Activated T-helper 2 cell treated with anti-CD3 and anti-CD28 coated beads, Interferon-gamma antibody, Interleukin-2, Interleukin-4, amounts not matched to agents 10 μg/mL and 5 μg/mL and 100 μg/mL, durations not matched to agents 14 hours and 24 hours and 36 hours (primary cell): ENCODE measurements at regions of chr21 and their contacts with region 1.

Region 1: GRCh38 chr21:28884976-28885852 is 107.5 kb downstream of the LTN1 start:
- DNase-seq: peak; percentile 93
- H3K4me3 Mint-ChIP-seq: peak overlapping the region; percentile 91
- H3K27ac Mint-ChIP-seq: peak overlapping the region; percentile 98
- H3K4me1 Mint-ChIP-seq: peaks cover 11% of the 10 kb centered on the region
- H3K27me3 Mint-ChIP-seq: peaks cover 10% of the 10 kb centered on the region

Region 2: DNA sequence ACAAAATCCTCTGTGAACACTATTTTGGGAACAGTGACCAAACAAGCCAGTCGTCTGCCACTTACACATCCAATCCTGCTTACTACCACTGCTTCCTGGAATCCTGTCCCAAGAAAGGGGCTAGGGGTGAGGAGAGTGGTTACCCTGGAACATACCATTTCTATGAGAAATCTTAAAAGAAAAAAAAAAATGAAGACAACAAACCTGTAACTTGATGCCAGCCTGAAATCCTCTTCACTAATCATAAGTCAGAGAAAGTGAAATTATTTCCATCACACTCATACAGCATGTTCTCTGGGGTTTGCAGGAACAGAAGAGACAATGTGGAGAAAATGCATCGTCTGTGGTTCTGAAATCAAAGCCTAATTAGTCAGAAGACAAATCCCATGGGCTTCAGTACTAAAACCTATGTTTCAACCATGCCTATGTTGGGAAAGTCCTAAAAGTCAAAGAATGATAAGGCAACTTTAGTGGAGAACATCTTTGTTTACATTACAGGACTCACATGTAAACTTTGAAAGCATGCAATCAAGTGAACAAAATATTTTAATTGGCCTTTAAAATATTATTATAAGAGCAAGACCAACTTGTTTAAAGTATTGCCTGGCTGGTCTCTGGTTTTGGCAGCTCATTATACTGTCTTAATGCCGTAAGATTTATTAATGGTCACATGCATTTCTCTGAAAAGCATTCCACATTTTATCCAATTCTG is 113.3 kb before region 1 on chr21:
- intact Hi-C with region 1: loop called (anchors 10 kb)
- DNase-seq: no peak
- H3K4me3 Mint-ChIP-seq: no peak overlapping the region
- H3K27ac Mint-ChIP-seq: no peak overlapping the region
- H3K4me1 Mint-ChIP-seq: peaks cover 40% of the 10 kb centered on the region
- H3K27me3 Mint-ChIP-seq: no peaks in the 10 kb centered on the region

Region 3: DNA sequence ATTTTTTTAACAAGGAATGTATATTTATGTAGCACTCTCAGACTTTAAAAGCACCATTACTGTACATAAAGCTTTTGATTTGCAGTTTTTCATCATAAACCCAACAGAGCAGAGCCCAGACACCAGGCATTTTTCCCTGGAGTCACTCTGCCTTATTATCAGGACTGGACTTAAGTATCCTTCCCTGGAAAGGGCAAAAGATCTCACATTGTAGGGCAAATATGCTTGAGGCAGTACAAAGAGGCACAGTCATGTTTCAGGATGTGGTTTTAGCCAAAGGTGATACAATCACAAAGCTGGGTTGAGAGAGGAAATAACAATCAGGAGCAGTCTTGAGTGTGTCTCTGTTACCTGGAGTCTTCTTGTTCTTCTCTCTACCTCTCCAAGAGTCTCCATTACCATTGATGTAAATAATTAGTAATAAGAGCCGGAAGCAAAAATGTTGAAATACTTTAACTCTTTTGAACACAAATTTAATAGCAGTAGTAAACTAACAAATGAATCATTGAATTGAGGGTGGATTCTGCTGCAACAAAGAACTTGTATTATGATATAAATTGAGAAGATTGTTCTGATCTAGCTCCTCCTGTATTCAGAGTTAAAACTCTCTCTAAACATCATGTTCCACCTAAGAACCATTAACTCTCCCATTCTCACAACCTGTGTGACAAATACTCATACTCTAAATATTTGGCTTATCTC is 53.0 kb before region 1 on chr21:
- intact Hi-C with region 1: loop called (anchors 2 kb)
- DNase-seq: peak; percentile 28
- H3K4me3 Mint-ChIP-seq: peak overlapping the region; percentile 9
- H3K27ac Mint-ChIP-seq: peak overlapping the region; percentile 67
- H3K4me1 Mint-ChIP-seq: peaks cover 66% of the 10 kb centered on the region
- H3K27me3 Mint-ChIP-seq: no peaks in the 10 kb centered on the region

Region 4: GRCh38 chr21:28992526-28993292 is 107.5 kb after region 1 on chr21 and contains the start of gene LTN1:
- intact Hi-C with region 1: loop called (anchors 1 kb)
- DNase-seq: peak; percentile 99
- H3K4me3 Mint-ChIP-seq: peak within 1 kb of the TSS; percentile 95
- H3K27ac Mint-ChIP-seq: peak within 1 kb of the TSS; percentile 95
- H3K4me1 Mint-ChIP-seq: peaks cover 30% of the 10 kb centered on the region
- H3K27me3 Mint-ChIP-seq: no peaks in the 10 kb centered on the region
- total RNA-seq, gene LTN1: 24.9 and 27.5 TPM in 2 replicates

Region 5: GRCh38 chr21:29024474-29025327 is 139.5 kb after region 1 on chr21 and contains the start of gene USP16:
- intact Hi-C with region 1: loop called (anchors 1 kb)
- DNase-seq: peak; percentile 96
- H3K4me3 Mint-ChIP-seq: peak within 1 kb of the TSS; percentile 96
- H3K27ac Mint-ChIP-seq: peak within 1 kb of the TSS; percentile 99
- H3K4me1 Mint-ChIP-seq: peaks cover 28% of the 10 kb centered on the region
- H3K27me3 Mint-ChIP-seq: no peaks in the 10 kb centered on the region
- total RNA-seq, gene USP16: 40.9 and 44.1 TPM in 2 replicates

Region 6: GRCh38 chr21:29073222-29074006 is 188.2 kb after region 1 on chr21 and contains the start of gene CCT8:
- intact Hi-C with region 1: loop called (anchors 1 kb)
- DNase-seq: peak; percentile 99
- H3K4me3 Mint-ChIP-seq: peak within 1 kb of the TSS; percentile 99
- H3K27ac Mint-ChIP-seq: peak within 1 kb of the TSS; percentile 98
- H3K4me1 Mint-ChIP-seq: peaks cover 43% of the 10 kb centered on the region
- H3K27me3 Mint-ChIP-seq: no peaks in the 10 kb centered on the region
- total RNA-seq, gene CCT8: 366 and 387 TPM in 2 replicates